ENCODE measurements at regions of chr9 and their contacts with region 1.

Region 1: GRCh38 chr9:74952281-74953151 is at the start of gene C9orf40:
- DNase-seq: peak; percentile 38
- ATAC-seq: peak; percentile 95
- H3K4me3 ChIP-seq: peak within 1 kb of the TSS; percentile 95
- H3K27ac ChIP-seq: peak within 1 kb of the TSS; percentile 91
- H3K4me1 ChIP-seq: peaks cover 3% of the 10 kb centered on the region; the same call in 1 of the 2 replicates
- H3K27me3 ChIP-seq: no peaks in the 10 kb centered on the region
- CTCF ChIP-seq: peak; percentile 72 to 89 (median 88)
- EP300 ChIP-seq: no peak
- POLR2A ChIP-seq: peak; percentile 87
- RAD21 ChIP-seq: peak; percentile 37; the same call in 1 of the 2 replicates
- polyA plus RNA-seq, gene C9orf40: 7.8 to 14.1 TPM

Region 2: GRCh38 chr9:74875656-74876413 is 76.7 kb before region 1 on chr9:
- CTCF ChIA-PET with region 1: no interaction called
- POLR2A ChIA-PET with region 1: no interaction called
- RAD21 ChIA-PET with region 1: no interaction called
- SMC1A ChIA-PET with region 1: no interaction called
- in situ Hi-C with region 1: no loop called
- intact Hi-C with region 1: no loop called
- DNase-seq: no peak
- ATAC-seq: no peak
- H3K4me3 ChIP-seq: no peak overlapping the region
- H3K27ac ChIP-seq: no peak overlapping the region
- H3K4me1 ChIP-seq: no peaks in the 10 kb centered on the region
- H3K27me3 ChIP-seq: no peaks in the 10 kb centered on the region
- CTCF ChIP-seq: no peak
- EP300 ChIP-seq: no peak
- POLR2A ChIP-seq: no peak
- RAD21 ChIP-seq: no peak

Region 3: GRCh38 chr9:75001719-75002422 is 49.4 kb after region 1 on chr9:
- CTCF ChIA-PET with region 1: interaction called, 8 read pairs
- POLR2A ChIA-PET with region 1: no interaction called
- RAD21 ChIA-PET with region 1: interaction called, 3 read pairs
- SMC1A ChIA-PET with region 1: interaction called, 7 read pairs
- in situ Hi-C with region 1: no loop called
- intact Hi-C with region 1: loop called (anchors 2 kb)
- DNase-seq: peak; percentile 36
- ATAC-seq: peak; percentile 96
- H3K4me3 ChIP-seq: no peak overlapping the region
- H3K27ac ChIP-seq: no peak overlapping the region
- H3K4me1 ChIP-seq: peaks cover 8% of the 10 kb centered on the region
- H3K27me3 ChIP-seq: no peaks in the 10 kb centered on the region
- CTCF ChIP-seq: peak; percentile 63 to 81 (median 69)
- EP300 ChIP-seq: no peak
- POLR2A ChIP-seq: no peak
- RAD21 ChIP-seq: peak; percentile 87

Region 4: GRCh38 chr9:75027187-75028107 is 74.9 kb after region 1 on chr9:
- CTCF ChIA-PET with region 1: interaction called, 34 read pairs
- POLR2A ChIA-PET with region 1: interaction called, 16 read pairs
- RAD21 ChIA-PET with region 1: interaction called, 4 read pairs
- SMC1A ChIA-PET with region 1: interaction called, 5 read pairs
- in situ Hi-C with region 1: no loop called
- intact Hi-C with region 1: loop called (anchors 2 kb)
- DNase-seq: no peak
- ATAC-seq: peak; percentile 74
- H3K4me3 ChIP-seq: peak overlapping the region; percentile 76
- H3K27ac ChIP-seq: peak overlapping the region; percentile 81
- H3K4me1 ChIP-seq: no peaks in the 10 kb centered on the region; the same call in 1 of the 2 replicates
- H3K27me3 ChIP-seq: no peaks in the 10 kb centered on the region
- CTCF ChIP-seq: peak in 2 of 3 experiments; percentile 3 to 37; a peak in 2 of 6 replicates
- EP300 ChIP-seq: no peak
- POLR2A ChIP-seq: no peak
- RAD21 ChIP-seq: no peak

Region 5: GRCh38 chr9:75088260-75088905 is 135.9 kb after region 1 on chr9 and contains the start of gene OSTF1:
- CTCF ChIA-PET with region 1: interaction called, 16 read pairs
- POLR2A ChIA-PET with region 1: interaction called, 8 read pairs
- RAD21 ChIA-PET with region 1: interaction called, 5 read pairs
- SMC1A ChIA-PET with region 1: interaction called, 5 read pairs
- in situ Hi-C with region 1: loop called (anchors 5 kb)
- intact Hi-C with region 1: no loop called
- DNase-seq: peak; percentile 64
- ATAC-seq: peak; percentile 89
- H3K4me3 ChIP-seq: peak within 1 kb of the TSS; percentile 93
- H3K27ac ChIP-seq: peak within 1 kb of the TSS; percentile 93
- H3K4me1 ChIP-seq: peaks cover 13% of the 10 kb centered on the region; the same call in 1 of the 2 replicates
- H3K27me3 ChIP-seq: no peaks in the 10 kb centered on the region
- CTCF ChIP-seq: no peak
- EP300 ChIP-seq: no peak
- POLR2A ChIP-seq: peak; percentile 95
- RAD21 ChIP-seq: no peak
- polyA plus RNA-seq, gene OSTF1: 36.2 to 45.3 TPM